GM13976 (cell line): ENCODE measurements at regions of chr19 and their contacts with region 1.

Region 1: DNA sequence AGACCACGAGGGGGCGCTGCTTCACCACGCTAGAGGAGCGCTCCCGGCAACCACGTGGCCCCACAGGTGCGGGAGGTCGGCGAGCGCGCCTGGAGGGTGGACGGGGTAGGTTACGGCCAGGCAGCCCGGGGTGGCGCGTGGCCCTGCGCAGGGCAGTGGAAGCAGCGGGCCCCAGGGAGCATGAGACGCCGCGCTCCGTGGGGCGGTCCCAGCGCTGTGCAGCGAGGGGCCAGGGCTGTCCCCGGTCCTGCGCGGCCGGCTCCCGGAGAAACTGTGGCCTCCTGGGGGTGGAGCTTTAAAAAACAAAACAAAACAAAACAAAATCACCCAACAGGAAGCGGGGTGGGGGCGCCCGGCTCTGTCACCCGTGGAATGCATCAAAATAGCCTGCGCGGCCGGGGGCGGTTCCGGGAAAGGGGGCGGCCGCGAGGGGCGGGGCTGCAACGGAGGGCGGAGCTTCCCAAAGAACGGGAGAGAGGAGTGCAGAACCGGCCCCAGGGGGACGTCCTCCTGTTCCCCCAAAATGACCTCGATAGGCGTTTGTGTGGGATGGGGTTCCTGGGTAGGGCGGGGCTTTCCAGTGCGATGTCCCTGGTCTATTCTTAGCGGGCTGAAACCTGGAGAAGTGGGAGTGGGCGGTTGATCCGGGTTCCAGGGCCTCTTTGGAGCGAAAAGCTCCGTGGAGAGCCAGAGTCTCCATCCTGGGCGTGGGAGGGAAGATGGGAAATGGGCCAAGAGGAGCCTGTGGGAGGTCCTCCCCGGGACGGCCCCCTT is 27.3 kb downstream of the NUMBL start:
- DNase-seq: peak; percentile 94
- CTCF ChIP-seq: no peak

Region 2: GRCh38 chr19:40006273-40006691 is 656.8 kb before region 1 on chr19:
- in situ Hi-C with region 1: no loop called
- DNase-seq: no peak
- CTCF ChIP-seq: no peak

Region 3: GRCh38 chr19:40716655-40717324 is 53.7 kb after region 1 on chr19 and contains the starts of genes COQ8B and ITPKC:
- in situ Hi-C with region 1: no loop called
- DNase-seq: peak; percentile 99
- CTCF ChIP-seq: no peak

Region 4: GRCh38 chr19:40750059-40750873 is 87.2 kb after region 1 on chr19 and contains the start of gene ACTMAP:
- in situ Hi-C with region 1: no loop called
- DNase-seq: peak; percentile 98
- CTCF ChIP-seq: no peak

Region 5: DNA sequence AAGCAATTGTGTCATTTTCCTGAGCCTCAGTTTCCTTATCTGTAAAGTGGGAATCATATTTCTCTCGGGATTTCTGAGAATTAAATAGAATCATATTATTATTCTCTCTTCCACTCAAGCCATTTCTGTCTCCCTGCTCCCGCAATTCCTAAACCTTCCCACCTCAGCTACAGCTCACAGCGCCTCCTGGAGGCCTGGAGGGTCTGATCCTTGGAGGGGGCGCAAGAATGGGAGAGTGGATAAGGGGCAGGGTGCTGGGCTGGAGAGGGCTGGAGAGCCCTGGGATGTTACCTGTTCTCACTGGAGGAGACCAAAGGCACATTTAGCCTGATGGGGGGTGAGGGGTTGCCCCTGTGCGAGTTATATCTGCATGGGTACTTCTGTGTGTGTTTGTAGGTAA is 498.8 kb after region 1 on chr19:
- in situ Hi-C with region 1: loop called (anchors 25 kb)
- DNase-seq: no peak
- CTCF ChIP-seq: no peak